ENCODE measurements at regions of chr9 and their contacts with region 1.

Region 1: DNA sequence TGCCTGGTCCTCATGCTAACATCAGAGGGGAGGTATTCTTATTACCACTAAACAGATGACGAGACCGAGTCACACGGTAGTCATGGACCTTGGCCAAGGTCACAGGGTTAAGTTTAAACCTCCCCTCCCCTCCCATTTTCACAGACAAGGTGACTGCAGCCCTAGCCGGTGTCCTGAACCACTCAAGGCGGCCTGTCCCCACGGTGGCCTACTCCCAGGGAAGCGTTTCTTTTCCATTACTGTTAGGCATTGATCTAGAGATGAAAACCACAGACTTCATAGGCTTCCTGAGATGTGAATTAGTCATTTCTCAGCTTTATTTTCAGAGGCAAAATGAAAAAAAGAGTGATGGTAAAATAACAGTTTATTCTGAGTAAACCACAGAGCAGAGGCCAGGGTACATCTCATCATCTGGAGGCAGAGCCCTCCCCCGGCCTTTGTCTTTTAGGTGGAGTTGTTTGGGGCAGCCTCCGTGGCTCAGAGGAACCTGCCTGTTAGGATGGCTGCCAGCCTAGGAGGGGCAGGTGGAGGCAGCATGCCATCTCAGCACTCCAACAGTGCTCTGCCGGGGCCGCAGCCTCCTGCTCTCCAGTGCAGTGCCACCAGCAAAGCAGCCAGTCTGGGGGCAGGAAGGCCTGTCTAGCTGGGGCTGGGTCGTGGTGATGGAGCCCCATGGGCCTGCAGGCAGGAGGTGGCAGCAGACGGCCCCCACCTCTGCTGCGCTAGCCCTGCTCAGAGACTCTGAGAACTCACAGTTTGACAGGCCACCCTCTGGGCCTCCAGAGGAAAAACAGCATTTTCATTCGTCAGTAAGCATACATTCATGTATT is 71.2 kb downstream of the RAPGEF1 start:
- DNase-seq: peak; percentile 58
- H3K4me3 Mint-ChIP-seq: peak overlapping the region; percentile 66
- H3K27ac Mint-ChIP-seq: peak overlapping the region; percentile 98
- H3K4me1 Mint-ChIP-seq: peaks cover 99% of the 10 kb centered on the region
- H3K27me3 Mint-ChIP-seq: no peaks in the 10 kb centered on the region

Region 2: GRCh38 chr9:131393622-131394463 is 274.8 kb before region 1 on chr9 and contains the start of gene PRRC2B:
- intact Hi-C with region 1: loop called (anchors 5 kb)
- DNase-seq: peak; percentile 76
- H3K4me3 Mint-ChIP-seq: peak within 1 kb of the TSS; percentile 89
- H3K27ac Mint-ChIP-seq: peak within 1 kb of the TSS; percentile 93
- H3K4me1 Mint-ChIP-seq: peaks cover 49% of the 10 kb centered on the region
- H3K27me3 Mint-ChIP-seq: peaks cover 21% of the 10 kb centered on the region
- total RNA-seq, gene PRRC2B: 103 and 108 TPM in 2 replicates

Region 3: GRCh38 chr9:131534721-131535237 is 133.9 kb before region 1 on chr9:
- intact Hi-C with region 1: no loop called
- DNase-seq: no peak
- H3K4me3 Mint-ChIP-seq: peak overlapping the region; percentile 37
- H3K27ac Mint-ChIP-seq: no peak overlapping the region
- H3K4me1 Mint-ChIP-seq: peaks cover 18% of the 10 kb centered on the region
- H3K27me3 Mint-ChIP-seq: peaks cover 1% of the 10 kb centered on the region

Region 4: GRCh38 chr9:131590908-131591844 is 77.5 kb before region 1 on chr9:
- intact Hi-C with region 1: loop called (anchors 5 kb)
- DNase-seq: peak; percentile 63
- H3K4me3 Mint-ChIP-seq: no peak overlapping the region
- H3K27ac Mint-ChIP-seq: peak overlapping the region; percentile 81
- H3K4me1 Mint-ChIP-seq: peaks cover 37% of the 10 kb centered on the region
- H3K27me3 Mint-ChIP-seq: no peaks in the 10 kb centered on the region

Region 5: GRCh38 chr9:131622523-131622922 is 46.1 kb before region 1 on chr9:
- intact Hi-C with region 1: no loop called
- DNase-seq: no peak
- H3K4me3 Mint-ChIP-seq: no peak overlapping the region
- H3K27ac Mint-ChIP-seq: no peak overlapping the region
- H3K4me1 Mint-ChIP-seq: peaks cover 50% of the 10 kb centered on the region
- H3K27me3 Mint-ChIP-seq: no peaks in the 10 kb centered on the region

Region 6: DNA sequence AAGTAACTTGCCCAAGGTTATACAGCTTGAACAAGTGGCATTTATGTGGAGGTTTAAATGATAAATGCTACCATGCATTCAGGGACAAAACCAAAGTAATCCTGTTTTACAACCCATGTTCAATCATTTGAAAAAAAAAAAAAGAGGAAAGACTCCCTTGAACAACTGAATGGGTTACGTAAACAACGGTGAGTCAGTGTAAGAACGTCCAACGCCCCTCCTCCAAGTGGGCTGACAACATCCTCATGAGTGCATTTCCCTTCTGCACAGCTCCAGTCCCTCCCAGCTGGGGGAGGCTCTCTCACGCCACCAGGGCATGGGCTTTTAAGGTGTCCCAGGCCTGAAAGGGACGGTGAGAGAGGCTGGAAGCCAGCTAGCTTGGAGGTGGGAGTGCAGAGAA is 33.4 kb before region 1 on chr9:
- intact Hi-C with region 1: loop called (anchors 2 kb)
- DNase-seq: peak; percentile 74
- H3K4me3 Mint-ChIP-seq: peak overlapping the region; percentile 33
- H3K27ac Mint-ChIP-seq: peak overlapping the region; percentile 85
- H3K4me1 Mint-ChIP-seq: peaks cover 78% of the 10 kb centered on the region
- H3K27me3 Mint-ChIP-seq: peaks cover 2% of the 10 kb centered on the region

Region 7: DNA sequence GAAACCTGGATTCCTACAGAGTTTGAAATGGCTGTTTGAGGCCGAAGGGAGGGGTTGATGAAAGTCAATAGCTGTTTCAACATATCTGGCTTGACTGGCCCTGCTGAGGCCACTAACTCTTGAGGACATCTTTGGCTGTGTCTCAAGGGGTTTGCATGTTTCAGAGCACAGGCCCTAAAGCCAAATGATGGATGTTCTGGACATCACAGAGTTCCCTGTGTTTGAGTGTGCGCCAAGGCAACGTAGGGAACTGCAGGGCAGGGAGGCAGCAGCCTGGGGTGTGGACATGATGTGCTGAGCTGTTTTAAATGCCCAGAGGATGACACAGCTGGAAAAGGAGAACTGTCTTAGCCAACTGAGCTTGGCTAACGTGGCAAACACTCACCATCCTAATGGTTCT is 18.4 kb before region 1 on chr9:
- intact Hi-C with region 1: loop called (anchors 1 kb)
- DNase-seq: no peak
- H3K4me3 Mint-ChIP-seq: no peak overlapping the region
- H3K27ac Mint-ChIP-seq: peak overlapping the region; percentile 71
- H3K4me1 Mint-ChIP-seq: peaks cover 73% of the 10 kb centered on the region
- H3K27me3 Mint-ChIP-seq: no peaks in the 10 kb centered on the region

Region 8: GRCh38 chr9:131692612-131693562 is 24.2 kb after region 1 on chr9:
- intact Hi-C with region 1: loop called (anchors 1 kb)
- DNase-seq: no peak
- H3K4me3 Mint-ChIP-seq: no peak overlapping the region
- H3K27ac Mint-ChIP-seq: no peak overlapping the region
- H3K4me1 Mint-ChIP-seq: peaks cover 82% of the 10 kb centered on the region
- H3K27me3 Mint-ChIP-seq: no peaks in the 10 kb centered on the region

Region 9: DNA sequence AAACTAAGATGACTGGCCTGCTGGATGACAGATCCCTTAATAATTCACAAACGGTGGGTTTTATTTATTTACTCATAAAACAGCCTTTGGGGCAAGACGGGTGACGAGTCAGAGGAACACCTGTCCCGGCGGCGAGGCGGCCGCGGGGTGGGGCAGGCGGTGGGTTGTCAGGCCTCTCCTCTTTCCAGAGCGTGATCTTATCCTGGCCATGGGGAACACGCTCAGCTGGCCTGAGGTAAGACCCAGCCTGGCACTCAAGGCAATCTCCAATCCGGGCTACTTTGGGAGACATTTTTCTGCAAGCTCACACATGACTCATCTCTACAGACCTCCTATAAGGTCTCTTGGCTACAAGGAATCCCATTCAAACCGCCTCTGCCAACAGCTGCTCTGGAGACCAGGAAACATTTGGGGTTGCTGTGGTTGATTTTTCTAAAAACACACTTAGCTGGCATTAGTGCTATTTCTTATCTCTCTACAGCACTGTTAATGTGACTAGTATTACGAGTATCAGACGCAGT is 64.9 kb after region 1 on chr9:
- intact Hi-C with region 1: loop called (anchors 1 kb)
- DNase-seq: no peak
- H3K4me3 Mint-ChIP-seq: peak overlapping the region; percentile 73
- H3K27ac Mint-ChIP-seq: peak overlapping the region; percentile 96
- H3K4me1 Mint-ChIP-seq: peaks cover 84% of the 10 kb centered on the region
- H3K27me3 Mint-ChIP-seq: no peaks in the 10 kb centered on the region

Region 10: DNA sequence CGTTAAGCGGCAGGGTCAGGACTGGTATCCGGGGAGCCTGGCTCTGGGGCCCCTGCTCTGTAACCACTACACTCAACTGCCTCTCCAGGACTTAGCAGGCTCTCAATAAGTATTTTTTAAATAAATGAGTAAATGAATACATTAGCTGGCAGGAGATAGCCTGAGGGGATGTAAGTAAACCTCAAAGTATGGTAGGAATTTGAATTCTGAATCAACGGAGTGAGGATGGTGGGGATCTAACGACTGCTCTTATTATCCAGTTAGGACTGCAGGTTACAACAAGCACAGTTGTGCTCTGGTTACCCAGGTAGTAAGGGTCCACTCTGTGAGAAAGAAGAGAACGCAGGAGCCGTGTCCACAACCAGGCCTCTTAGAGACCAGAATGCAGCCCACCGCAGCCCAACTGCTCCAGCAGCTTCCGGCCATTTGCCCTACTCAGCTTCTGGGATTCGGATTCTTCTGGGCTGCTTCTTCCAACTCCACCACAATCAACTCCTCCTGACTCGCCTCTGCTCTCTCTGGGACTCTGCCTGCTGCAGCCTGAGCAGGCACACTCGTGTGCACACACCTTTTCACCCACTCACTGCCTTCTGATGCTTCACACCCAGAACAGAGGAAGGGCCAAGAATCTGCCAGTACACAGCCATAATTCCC is 358.4 kb after region 1 on chr9:
- intact Hi-C with region 1: no loop called
- DNase-seq: no peak
- H3K4me3 Mint-ChIP-seq: no peak overlapping the region
- H3K27ac Mint-ChIP-seq: no peak overlapping the region
- H3K4me1 Mint-ChIP-seq: peaks cover 5% of the 10 kb centered on the region
- H3K27me3 Mint-ChIP-seq: no peaks in the 10 kb centered on the region

Measured in activated T-helper 1 cell treated with anti-CD3 and anti-CD28 coated beads, Interleukin-12 subunit alpha, Interleukin-12 subunit beta, Interleukin-2, Interleukin-4 antibody, amounts not matched to agents 30 ng/mL and 10 ng/mL and 1 ng/mL, durations not matched to agents 14 hours and 24 hours and 36 hours (primary cell).